Activated T-helper 1 cell treated with anti-CD3 and anti-CD28 coated beads, Interleukin-12 subunit alpha, Interleukin-12 subunit beta, Interleukin-2, Interleukin-4 antibody, amounts not matched to agents 30 ng/mL and 10 ng/mL and 1 ng/mL, durations not matched to agents 14 hours and 24 hours and 36 hours (primary cell): ENCODE measurements at regions of chr2 and their contacts with region 1.

Region 1: GRCh38 chr2:196987649-196988364 is 61.3 kb upstream of the PGAP1 start:
- DNase-seq: peak; percentile 46
- H3K4me3 Mint-ChIP-seq: peak overlapping the region; percentile 66
- H3K27ac Mint-ChIP-seq: peak overlapping the region; percentile 94
- H3K4me1 Mint-ChIP-seq: peaks cover 62% of the 10 kb centered on the region
- H3K27me3 Mint-ChIP-seq: no peaks in the 10 kb centered on the region

Region 2: GRCh38 chr2:196149948-196150347 is 837.9 kb before region 1 on chr2:
- intact Hi-C with region 1: loop called (anchors 10 kb)
- DNase-seq: no peak
- H3K4me3 Mint-ChIP-seq: peak overlapping the region; percentile 65
- H3K27ac Mint-ChIP-seq: peak overlapping the region; percentile 77
- H3K4me1 Mint-ChIP-seq: peaks cover 91% of the 10 kb centered on the region
- H3K27me3 Mint-ChIP-seq: no peaks in the 10 kb centered on the region

Region 3: GRCh38 chr2:196798980-196799379 is 188.8 kb before region 1 on chr2:
- intact Hi-C with region 1: loop called (anchors 1 kb)
- DNase-seq: no peak
- H3K4me3 Mint-ChIP-seq: peak overlapping the region; percentile 96
- H3K27ac Mint-ChIP-seq: peak overlapping the region; percentile 93
- H3K4me1 Mint-ChIP-seq: peaks cover 31% of the 10 kb centered on the region
- H3K27me3 Mint-ChIP-seq: peaks cover 2% of the 10 kb centered on the region

Region 4: GRCh38 chr2:196961889-196962288 is 25.9 kb before region 1 on chr2:
- intact Hi-C with region 1: loop called (anchors 1 kb)
- DNase-seq: no peak
- H3K4me3 Mint-ChIP-seq: peak overlapping the region; percentile 13
- H3K27ac Mint-ChIP-seq: peak overlapping the region; percentile 57
- H3K4me1 Mint-ChIP-seq: peaks cover 40% of the 10 kb centered on the region
- H3K27me3 Mint-ChIP-seq: no peaks in the 10 kb centered on the region

Region 5: GRCh38 chr2:197293252-197294007 is 305.6 kb after region 1 on chr2:
- intact Hi-C with region 1: loop called (anchors 2 kb)
- DNase-seq: no peak
- H3K4me3 Mint-ChIP-seq: peak overlapping the region; percentile 68
- H3K27ac Mint-ChIP-seq: peak overlapping the region; percentile 89
- H3K4me1 Mint-ChIP-seq: peaks cover 88% of the 10 kb centered on the region
- H3K27me3 Mint-ChIP-seq: no peaks in the 10 kb centered on the region